Activated T-helper 1 cell treated with anti-CD3 and anti-CD28 coated beads, Interleukin-12 subunit alpha, Interleukin-12 subunit beta, Interleukin-2, Interleukin-4 antibody, amounts not matched to agents 30 ng/mL and 10 ng/mL and 1 ng/mL, durations not matched to agents 14 hours and 24 hours and 36 hours (primary cell): ENCODE measurements at regions of chr15 and their contacts with region 1.

Region 1: DNA sequence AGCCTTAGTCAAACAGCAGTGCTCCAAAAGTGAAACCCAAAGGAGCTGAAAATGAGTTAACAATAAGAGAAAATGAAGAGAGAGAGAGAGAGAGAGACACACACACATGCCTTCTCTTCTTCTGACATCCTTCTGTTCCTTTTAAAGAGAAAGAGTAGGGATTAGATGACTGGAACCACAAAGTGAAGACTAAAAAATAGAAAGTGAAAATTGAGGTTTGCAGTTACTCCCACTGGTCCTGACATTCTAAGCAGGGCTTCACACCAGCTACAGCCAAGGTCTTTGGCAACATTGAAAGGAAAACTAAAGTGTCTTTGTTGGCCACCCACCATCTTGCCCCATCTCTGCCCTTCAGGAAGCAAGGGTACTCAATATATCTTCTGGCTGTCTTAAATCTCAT is 59.2 kb downstream of the USP50 start:
- DNase-seq: no peak
- H3K4me3 Mint-ChIP-seq: no peak overlapping the region
- H3K27ac Mint-ChIP-seq: peak overlapping the region; percentile 4
- H3K4me1 Mint-ChIP-seq: peaks cover 14% of the 10 kb centered on the region
- H3K27me3 Mint-ChIP-seq: no peaks in the 10 kb centered on the region

Region 2: GRCh38 chr15:50377867-50378751 is 109.2 kb before region 1 on chr15:
- intact Hi-C with region 1: loop called (anchors 1 kb)
- DNase-seq: no peak
- H3K4me3 Mint-ChIP-seq: peak overlapping the region; percentile 44
- H3K27ac Mint-ChIP-seq: peak overlapping the region; percentile 92
- H3K4me1 Mint-ChIP-seq: peaks cover 18% of the 10 kb centered on the region
- H3K27me3 Mint-ChIP-seq: no peaks in the 10 kb centered on the region

Region 3: DNA sequence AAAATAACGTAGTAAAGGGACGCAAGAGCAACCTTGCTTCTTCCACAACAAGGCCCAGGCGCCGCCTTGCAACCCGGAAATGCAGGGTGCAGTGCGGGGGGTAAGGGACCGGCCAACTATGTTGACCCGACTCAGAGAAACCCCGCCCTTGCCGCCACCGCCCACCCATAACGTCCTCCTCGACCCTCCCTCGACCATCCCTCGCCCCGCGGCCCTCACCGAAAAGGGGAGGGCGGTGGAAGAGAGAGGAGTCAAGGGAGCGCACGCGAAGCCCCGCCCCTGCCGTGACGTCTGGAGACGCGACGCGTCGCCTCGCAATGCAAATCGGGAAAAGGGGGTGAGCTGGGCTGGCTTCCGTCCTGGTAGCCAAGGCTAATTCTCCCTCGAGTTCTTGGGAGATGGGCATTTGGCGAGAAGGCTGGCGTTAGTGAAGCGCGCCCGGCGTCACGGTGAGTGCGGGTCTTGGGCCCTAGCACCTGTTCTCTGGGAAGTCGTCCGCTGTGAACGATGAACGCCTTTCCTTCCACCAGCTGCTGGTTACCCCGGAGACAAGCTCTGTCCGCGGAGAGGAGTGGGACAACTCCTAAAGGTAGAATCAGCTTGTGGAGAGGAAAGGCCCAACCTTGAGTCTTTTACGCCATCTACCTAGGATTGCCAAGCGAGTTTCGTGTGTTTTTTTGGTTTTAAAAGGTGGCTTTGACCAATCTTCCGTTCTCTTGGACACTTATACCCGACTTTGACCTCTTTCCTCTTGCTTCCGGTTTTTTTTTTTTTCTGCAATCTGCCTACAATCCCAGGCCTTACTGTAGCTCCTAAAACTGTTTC is 63.0 kb before region 1 on chr15 and contains the start of gene USP8:
- intact Hi-C with region 1: loop called (anchors 1 kb)
- DNase-seq: peak; percentile 92
- H3K4me3 Mint-ChIP-seq: peak within 1 kb of the TSS; percentile 98
- H3K27ac Mint-ChIP-seq: peak within 1 kb of the TSS; percentile 92
- H3K4me1 Mint-ChIP-seq: peaks cover 25% of the 10 kb centered on the region
- H3K27me3 Mint-ChIP-seq: no peaks in the 10 kb centered on the region
- total RNA-seq, gene USP8: 66.2 and 66.3 TPM in 2 replicates

Region 4: GRCh38 chr15:50463423-50464358 is 23.6 kb before region 1 on chr15:
- intact Hi-C with region 1: loop called (anchors 1 kb)
- DNase-seq: no peak
- H3K4me3 Mint-ChIP-seq: no peak overlapping the region
- H3K27ac Mint-ChIP-seq: peak overlapping the region; percentile 61
- H3K4me1 Mint-ChIP-seq: peaks cover 31% of the 10 kb centered on the region
- H3K27me3 Mint-ChIP-seq: no peaks in the 10 kb centered on the region

Region 5: GRCh38 chr15:50562735-50563640 is 75.7 kb after region 1 on chr15:
- intact Hi-C with region 1: loop called (anchors 1 kb)
- DNase-seq: peak; percentile 8
- H3K4me3 Mint-ChIP-seq: peak overlapping the region; percentile 16
- H3K27ac Mint-ChIP-seq: peak overlapping the region; percentile 87
- H3K4me1 Mint-ChIP-seq: peaks cover 25% of the 10 kb centered on the region
- H3K27me3 Mint-ChIP-seq: no peaks in the 10 kb centered on the region

Region 6: GRCh38 chr15:50765195-50765973 is 278.1 kb after region 1 on chr15 and contains the start of gene SPPL2A:
- intact Hi-C with region 1: loop called (anchors 2 kb)
- DNase-seq: peak; percentile 77
- H3K4me3 Mint-ChIP-seq: peak within 1 kb of the TSS; percentile 96
- H3K27ac Mint-ChIP-seq: peak within 1 kb of the TSS; percentile 97
- H3K4me1 Mint-ChIP-seq: peaks cover 69% of the 10 kb centered on the region
- H3K27me3 Mint-ChIP-seq: no peaks in the 10 kb centered on the region
- total RNA-seq, gene SPPL2A: 100 and 103 TPM in 2 replicates